ENCODE measurements at regions of chr12 and their contacts with region 1.

Region 1: GRCh38 chr12:53844989-53845844 is 93.4 kb upstream of the HOXC13 start:
- DNase-seq: peak; percentile 89 to 93
- H3K4me3 ChIP-seq: peak overlapping the region; percentile 6; the same call in 1 of the 2 replicates
- H3K27ac ChIP-seq: peak overlapping the region; percentile 80
- H3K4me1 ChIP-seq: peaks cover 45% of the 10 kb centered on the region
- H3K27me3 ChIP-seq: no peaks in the 10 kb centered on the region
- CTCF ChIP-seq: no peak

Region 2: DNA sequence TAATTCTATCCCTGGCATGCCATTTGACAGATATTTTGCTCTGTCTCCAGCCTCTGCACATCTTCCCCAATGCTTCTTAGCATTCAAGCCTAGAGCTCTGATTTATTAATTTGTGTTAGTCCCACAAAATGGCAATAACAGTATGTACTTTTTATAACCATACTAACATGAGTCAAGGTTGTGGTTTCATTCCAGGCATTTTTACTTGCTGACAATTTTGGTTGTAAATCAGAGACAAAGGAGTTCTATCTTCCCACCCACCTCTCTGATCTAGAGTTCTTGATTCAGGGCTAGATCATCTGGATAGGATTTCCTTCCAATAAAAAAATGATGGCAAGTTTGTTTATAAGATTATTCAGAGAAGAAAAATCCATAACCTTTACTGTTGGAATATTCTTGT is 74.9 kb before region 1 on chr12:
- CTCF ChIA-PET with region 1: no interaction called
- POLR2A ChIA-PET with region 1: no interaction called
- intact Hi-C with region 1: loop called (anchors 5 kb)
- DNase-seq: peak in 1 of 2 experiments; percentile 92
- H3K4me3 ChIP-seq: no peak overlapping the region
- H3K27ac ChIP-seq: peak overlapping the region; percentile 53
- H3K4me1 ChIP-seq: peaks cover 39% of the 10 kb centered on the region
- H3K27me3 ChIP-seq: no peaks in the 10 kb centered on the region
- CTCF ChIP-seq: no peak

Region 3: GRCh38 chr12:53805127-53805466 is 40.1 kb before region 1 on chr12:
- CTCF ChIA-PET with region 1: no interaction called
- POLR2A ChIA-PET with region 1: interaction called, 11 read pairs
- intact Hi-C with region 1: loop called (anchors 1 kb)
- DNase-seq: peak in 1 of 2 experiments; percentile 78
- H3K4me3 ChIP-seq: peak overlapping the region; percentile 32; the same call in 1 of the 2 replicates
- H3K27ac ChIP-seq: peak overlapping the region; percentile 96
- H3K4me1 ChIP-seq: peaks cover 74% of the 10 kb centered on the region
- H3K27me3 ChIP-seq: no peaks in the 10 kb centered on the region
- CTCF ChIP-seq: no peak

Region 4: DNA sequence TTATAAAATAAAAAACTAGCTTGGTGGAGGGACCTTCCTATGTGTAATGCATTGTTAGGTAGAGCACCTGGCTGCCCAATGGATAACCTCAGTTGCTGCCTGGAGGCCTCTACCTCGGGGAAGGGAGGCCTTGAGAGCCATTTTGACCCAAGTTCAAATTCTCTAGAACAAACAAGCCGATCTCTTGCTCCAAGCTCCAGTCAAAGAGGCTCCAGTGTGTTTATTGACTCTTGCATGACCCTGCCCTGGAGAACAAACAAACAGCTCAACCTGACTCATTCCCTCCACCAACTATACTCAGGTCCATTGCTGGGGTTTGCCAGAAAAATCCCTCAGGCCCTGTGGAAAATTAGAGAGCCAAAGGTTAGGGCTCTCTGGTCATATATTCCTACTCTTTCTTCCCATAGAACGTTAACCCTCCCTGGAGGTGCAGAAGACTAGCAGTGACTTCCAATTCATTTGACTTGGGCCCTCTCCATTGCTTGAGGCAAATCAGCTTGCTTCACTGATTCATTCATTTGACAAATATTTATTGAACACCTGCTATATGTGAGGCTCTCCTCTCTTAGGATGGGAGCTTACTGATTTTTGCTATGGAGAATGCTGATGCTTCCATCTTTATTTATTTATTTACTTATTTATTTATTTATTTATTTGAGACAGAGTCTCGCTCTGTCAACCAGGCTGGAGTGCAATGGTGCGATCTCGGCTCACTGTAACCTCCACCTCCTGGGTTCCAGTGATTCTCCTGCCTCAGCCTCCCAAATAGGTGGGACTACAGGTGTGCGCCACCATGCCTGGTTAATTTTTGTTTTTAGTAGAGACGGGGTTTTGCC is 19.8 kb before region 1 on chr12:
- CTCF ChIA-PET with region 1: no interaction called
- POLR2A ChIA-PET with region 1: no interaction called
- intact Hi-C with region 1: loop called (anchors 1 kb)
- DNase-seq: peak; percentile 69 to 99
- H3K4me3 ChIP-seq: no peak overlapping the region
- H3K27ac ChIP-seq: peak overlapping the region; percentile 87
- H3K4me1 ChIP-seq: peaks cover 79% of the 10 kb centered on the region
- H3K27me3 ChIP-seq: no peaks in the 10 kb centered on the region
- CTCF ChIP-seq: no peak

Region 5: DNA sequence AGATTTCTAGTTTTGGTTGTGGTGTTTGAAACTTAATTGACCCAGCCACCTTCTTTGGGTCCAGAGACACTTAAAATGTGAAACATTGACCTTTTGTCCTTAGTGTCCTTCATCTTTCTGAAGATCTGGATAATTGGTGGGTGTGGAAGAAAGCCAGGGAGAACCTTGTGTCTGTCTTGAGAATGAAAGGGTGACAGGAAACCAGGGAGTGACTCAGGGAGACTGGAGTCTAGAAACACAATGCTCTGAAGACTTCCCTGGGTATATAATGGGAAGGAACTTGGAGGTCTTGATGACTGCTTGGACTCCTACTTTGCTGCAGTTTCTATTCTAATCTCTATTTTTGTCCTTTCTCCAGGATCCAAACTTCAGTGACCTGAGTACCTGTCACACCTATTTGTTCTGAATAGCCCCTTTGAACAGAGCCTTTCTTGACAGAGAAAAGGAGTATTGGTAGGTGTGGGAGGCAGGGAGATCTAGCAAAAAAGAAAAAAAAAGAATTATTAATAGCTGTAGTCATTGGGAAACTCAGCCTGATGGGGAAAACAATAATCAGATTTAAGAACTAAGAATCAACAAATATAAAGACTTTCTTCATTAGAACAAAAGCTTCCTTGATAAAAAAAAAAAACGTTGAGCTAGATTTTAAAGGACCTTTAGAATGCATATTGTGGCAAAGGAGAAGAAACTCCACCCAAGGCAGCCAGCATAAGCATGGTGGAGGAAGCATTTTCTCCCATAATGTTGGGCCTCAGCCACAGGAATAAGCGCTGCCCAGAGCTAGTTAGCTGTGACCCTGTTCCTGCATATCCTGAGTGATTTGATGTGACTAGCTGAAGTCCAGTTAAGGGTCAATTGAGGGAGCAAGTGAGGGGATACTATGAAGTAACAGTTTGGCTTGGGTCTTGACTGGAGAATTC is 15.5 kb after region 1 on chr12:
- CTCF ChIA-PET with region 1: no interaction called
- POLR2A ChIA-PET with region 1: interaction called, 11 read pairs
- intact Hi-C with region 1: loop called (anchors 1 kb)
- DNase-seq: no peak
- H3K4me3 ChIP-seq: no peak overlapping the region
- H3K27ac ChIP-seq: no peak overlapping the region
- H3K4me1 ChIP-seq: peaks cover 21% of the 10 kb centered on the region
- H3K27me3 ChIP-seq: no peaks in the 10 kb centered on the region
- CTCF ChIP-seq: no peak

Region 6: DNA sequence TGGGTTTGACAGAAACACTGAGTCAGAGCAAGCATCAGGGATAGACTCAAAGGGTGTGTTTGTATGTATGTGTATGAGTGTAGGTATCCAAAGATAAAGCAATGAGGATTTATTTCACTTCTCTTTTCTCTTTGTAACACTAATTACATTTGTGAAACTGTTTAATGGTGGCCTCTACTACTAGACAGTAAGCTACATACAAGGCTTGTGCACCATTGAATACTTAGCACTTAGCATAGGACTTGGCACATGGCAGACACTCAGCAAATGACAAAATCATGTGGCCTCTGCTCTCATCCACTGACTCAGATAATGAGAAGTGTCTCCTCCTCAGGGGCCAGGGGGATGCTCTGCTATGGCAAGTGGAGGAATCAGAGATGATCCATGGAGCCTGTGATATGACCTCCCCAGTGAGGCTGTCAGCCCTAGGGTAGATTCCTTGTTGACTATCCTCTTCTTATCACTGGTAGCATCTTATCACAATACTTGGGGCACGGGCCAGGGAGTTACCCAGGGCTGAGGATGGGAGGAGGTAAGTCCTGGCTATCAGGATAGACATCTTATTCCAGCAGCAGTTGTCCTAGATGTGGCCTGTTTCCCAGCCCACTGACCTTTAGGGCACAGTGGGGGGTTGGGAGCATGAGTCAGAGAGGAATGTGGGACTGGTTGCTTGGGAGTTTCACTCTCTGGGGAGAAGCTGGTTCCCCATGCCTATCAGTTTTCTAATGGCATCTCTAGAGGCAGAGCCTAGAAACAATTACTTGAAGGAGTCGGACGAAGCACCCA is 22.2 kb after region 1 on chr12:
- CTCF ChIA-PET with region 1: no interaction called
- POLR2A ChIA-PET with region 1: no interaction called
- intact Hi-C with region 1: loop called (anchors 1 kb)
- DNase-seq: peak; percentile 93
- H3K4me3 ChIP-seq: no peak overlapping the region
- H3K27ac ChIP-seq: peak overlapping the region; percentile 88
- H3K4me1 ChIP-seq: peaks cover 49% of the 10 kb centered on the region
- H3K27me3 ChIP-seq: no peaks in the 10 kb centered on the region
- CTCF ChIP-seq: no peak

Region 7: GRCh38 chr12:54680374-54680773 is 835.2 kb after region 1 on chr12:
- CTCF ChIA-PET with region 1: no interaction called
- POLR2A ChIA-PET with region 1: no interaction called
- intact Hi-C with region 1: no loop called
- DNase-seq: peak in 1 of 2 experiments; percentile 7
- H3K4me3 ChIP-seq: no peak overlapping the region
- H3K27ac ChIP-seq: no peak overlapping the region
- H3K4me1 ChIP-seq: no peaks in the 10 kb centered on the region
- H3K27me3 ChIP-seq: peaks cover 38% of the 10 kb centered on the region
- CTCF ChIP-seq: peak; percentile 61